Activated CD8-positive, alpha-beta T cell treated with anti-CD3 and anti-CD28 coated beads, Interleukin-2, amount 10 ng/mL, durations not matched to agents 7 days and 5 days (primary cell): ENCODE measurements at regions of chr9 and their contacts with region 1.

Region 1: DNA sequence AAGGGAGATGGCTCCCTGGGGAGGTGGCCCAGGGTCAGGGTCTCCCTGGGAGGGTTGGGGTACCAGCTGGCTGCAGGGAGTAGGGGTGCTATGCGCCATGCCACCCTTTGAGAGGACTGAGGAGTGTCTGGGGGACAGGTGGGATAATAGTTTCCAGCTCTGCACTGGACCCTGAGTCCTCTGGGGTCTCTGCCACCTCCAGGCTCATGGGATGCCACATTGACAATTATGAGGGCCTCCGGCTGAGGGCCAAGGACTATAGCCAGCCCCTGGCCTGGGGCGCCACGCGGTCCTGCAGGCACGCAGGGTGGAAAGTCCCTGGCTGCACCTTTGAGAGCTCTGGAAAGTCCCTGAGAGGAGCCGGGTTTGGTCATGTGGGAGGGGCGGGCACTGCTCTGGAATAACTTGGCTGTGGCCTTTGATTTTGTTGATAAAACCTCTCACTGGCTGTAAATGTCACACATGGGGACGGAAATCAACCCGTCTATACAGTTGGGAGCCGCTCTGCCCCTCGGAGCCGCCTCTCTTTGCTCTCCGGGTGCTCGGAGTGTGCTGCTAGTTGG is 16.0 kb downstream of the TRAF2 start:
- DNase-seq: peak; percentile 61
- ATAC-seq: peak; percentile 74
- H3K4me3 Mint-ChIP-seq: peak overlapping the region; percentile 36
- H3K27ac Mint-ChIP-seq: peak overlapping the region; percentile 83
- H3K4me1 Mint-ChIP-seq: peaks cover 32% of the 10 kb centered on the region
- H3K27me3 Mint-ChIP-seq: no peaks in the 10 kb centered on the region

Region 2: DNA sequence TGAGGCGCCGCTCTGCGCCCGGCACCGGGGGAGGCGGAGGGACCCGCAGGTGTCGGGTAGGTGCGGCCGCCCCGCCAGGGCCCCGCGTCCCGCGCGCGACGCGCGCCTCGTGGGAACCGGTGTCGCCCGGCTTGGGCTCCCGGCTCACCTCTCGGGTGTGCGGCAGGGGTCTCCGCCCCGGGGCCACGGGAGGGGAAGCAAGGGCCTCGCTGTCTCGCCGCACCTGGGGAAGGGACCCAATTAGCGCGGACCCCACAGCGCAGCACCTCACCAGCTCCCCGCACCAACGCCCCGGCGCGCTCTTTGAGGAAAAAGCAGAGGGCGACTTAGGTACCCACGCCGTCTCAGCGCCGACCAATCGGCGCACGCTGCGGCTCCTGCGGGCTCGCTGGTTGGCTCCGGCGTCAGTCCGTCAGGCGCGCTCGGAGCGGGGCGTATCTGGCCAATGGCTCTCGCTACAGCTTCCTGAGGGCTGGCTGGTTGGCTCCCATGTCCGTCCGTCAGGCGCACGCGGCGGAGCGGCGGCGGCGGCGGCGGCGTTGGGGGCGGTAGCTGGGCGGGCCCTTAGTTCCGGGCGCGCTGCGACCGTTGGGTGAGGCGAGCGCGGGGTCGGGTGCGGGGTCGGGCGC is 16.3 kb before region 1 on chr9 and contains the start of gene TRAF2:
- CTCF ChIA-PET with region 1: interaction called, 7 read pairs
- POLR2A ChIA-PET with region 1: interaction called, 28 read pairs
- DNase-seq: peak; percentile 98
- ATAC-seq: peak; percentile 93
- H3K4me3 Mint-ChIP-seq: peak within 1 kb of the TSS; percentile 98
- H3K27ac Mint-ChIP-seq: peak within 1 kb of the TSS; percentile 89
- H3K4me1 Mint-ChIP-seq: peaks cover 51% of the 10 kb centered on the region
- H3K27me3 Mint-ChIP-seq: no peaks in the 10 kb centered on the region
- total RNA-seq, gene TRAF2: 48.5 to 57.2 TPM